ENCODE measurements at regions of chr10 and their contacts with region 1.

Region 1: DNA sequence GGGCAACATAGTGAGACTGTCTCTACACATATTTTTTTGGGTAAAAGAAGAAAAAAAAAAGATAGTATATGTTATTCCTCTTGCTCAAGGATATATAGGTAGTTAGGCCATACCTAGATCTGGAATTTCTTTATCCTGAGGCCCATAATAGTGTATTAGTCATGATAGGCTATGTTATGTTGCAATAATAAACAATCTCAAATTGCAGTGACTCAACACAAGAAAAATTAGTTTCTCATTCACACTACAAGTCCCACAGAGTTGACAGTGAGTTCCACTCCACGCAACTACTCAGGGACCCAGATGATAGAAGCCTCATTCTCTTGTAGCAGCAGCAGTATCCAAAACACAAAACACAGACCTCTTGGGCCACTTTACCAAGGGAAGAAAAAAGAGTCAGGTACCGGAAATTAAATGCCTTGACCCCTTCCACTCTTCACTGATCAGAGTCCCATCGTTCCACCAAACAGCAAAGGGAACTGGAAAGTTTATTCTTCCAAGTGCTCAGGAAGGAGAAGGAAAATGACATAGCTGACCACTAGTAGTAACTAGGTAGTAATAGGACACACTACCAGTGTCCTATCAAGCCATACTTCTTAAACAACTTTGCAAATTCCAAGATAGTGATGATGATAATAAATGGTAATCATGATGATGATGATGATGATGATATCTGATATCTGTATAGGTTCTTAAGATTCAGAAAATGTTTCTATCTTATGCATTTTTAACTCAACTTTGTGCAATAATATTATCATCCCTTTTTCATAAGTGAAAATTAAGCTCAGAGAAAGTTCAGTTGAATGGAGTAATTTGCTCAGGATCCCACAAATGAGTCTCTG is 7.5 kb upstream of the C10orf67 start:
- DNase-seq: no peak
- ATAC-seq: no peak
- H3K4me3 ChIP-seq: no peak overlapping the region
- H3K27ac ChIP-seq: no peak overlapping the region
- H3K4me1 ChIP-seq: peaks cover 0 to 13% (median 4%) of the 10 kb centered on the region in 12 donors
- H3K27me3 ChIP-seq: no peaks in the 10 kb centered on the region
- CTCF ChIP-seq: no peak
- POLR2A ChIP-seq: no peak

Region 2: DNA sequence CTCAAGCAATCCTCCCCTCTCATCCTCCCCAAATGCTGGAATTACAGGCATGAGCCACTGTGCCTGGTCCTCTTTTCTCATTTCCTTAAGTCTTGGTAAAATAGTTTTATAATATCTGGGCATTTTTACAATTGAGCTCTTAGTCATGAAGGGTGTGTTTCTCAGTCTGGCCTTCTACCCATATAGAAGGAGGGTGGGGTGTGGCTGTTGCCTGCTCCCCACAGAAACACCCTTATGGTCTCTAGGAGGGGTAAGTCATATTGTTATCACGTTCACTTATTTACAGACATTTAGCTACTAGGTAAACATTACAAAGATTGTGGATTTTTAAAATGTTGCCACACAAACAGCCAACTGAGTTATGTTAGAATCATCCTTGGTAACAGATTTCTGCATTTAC is 80.0 kb after region 1 on chr10:
- intact Hi-C with region 1: loop called in 4 of 10 experiments (anchors 2 to 10 kb)
- DNase-seq: no peak
- ATAC-seq: peak in 1 of 4 donors; percentile 45
- H3K4me3 ChIP-seq: no peak overlapping the region
- H3K27ac ChIP-seq: peak overlapping the region in 1 of 12 donors; percentile 73
- H3K4me1 ChIP-seq: peaks cover 0 to 21% (median 0%) of the 10 kb centered on the region in 12 donors
- H3K27me3 ChIP-seq: no peaks in the 10 kb centered on the region
- CTCF ChIP-seq: no peak
- POLR2A ChIP-seq: no peak